K562 (cell line): ENCODE measurements at regions of chr19 and their contacts with region 1.

Region 1: GRCh38 chr19:925526-926322 is at the start of gene ARID3A:
- DNase-seq: peak; percentile 77 to 94 (median 87)
- ATAC-seq: peak; percentile 83
- H3K4me3 ChIP-seq: peak within 1 kb of the TSS; percentile 99
- H3K27ac ChIP-seq: peak within 1 kb of the TSS; percentile 97
- H3K4me1 ChIP-seq: peaks cover 8 to 71% of the 10 kb centered on the region in 2 experiments; a peak in 4 of 5 replicates
- H3K27me3 ChIP-seq: no peaks in the 10 kb centered on the region
- CTCF ChIP-seq: no peak
- EP300 ChIP-seq: no peak
- POLR2A ChIP-seq: no peak
- RAD21 ChIP-seq: no peak
- polyA plus RNA-seq, gene ARID3A: 1.4 to 2.0 TPM

Region 2: DNA sequence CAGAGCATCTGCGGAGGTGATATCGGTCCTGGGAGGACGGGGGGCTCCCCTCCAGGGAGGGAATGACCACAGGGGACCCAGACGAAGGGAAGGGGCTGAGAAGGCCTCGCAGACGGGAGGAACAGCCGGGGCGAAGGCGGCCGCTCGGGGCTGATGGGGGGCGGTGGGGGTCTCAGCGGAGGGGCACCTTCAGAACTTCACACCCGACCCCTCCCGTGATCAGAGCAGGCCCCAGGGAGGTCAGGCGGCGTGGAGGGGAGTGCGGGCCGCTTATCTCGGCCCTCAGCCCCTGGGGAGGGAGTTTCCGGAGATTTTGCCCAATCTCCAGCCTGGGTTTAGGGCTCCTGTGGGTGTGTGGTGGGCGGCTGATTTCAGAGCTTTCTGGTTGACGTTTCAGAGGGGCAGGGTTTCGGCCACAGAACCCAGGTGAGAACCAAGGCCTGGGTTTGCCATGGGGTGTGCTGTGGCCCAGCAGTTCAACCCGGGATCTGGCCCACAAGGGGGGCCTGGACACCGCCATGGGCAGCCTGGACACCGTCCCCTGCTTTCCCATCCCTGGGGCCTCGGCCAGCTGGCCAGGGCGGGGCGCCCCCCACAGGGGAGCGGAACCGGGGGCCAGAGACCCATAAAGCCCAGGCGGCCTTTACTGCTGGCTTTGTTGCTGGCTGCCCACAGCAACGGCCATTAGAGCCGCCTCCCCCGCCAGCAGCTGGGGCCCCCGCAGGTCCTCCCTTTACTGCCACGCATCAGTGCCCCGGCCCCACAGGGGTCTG is 29.1 kb after region 1 on chr19:
- CTCF ChIA-PET with region 1: no interaction called
- POLR2A ChIA-PET with region 1: interaction called, 5 read pairs
- in situ Hi-C with region 1: no loop called
- intact Hi-C with region 1: loop called (anchors 2 kb)
- DNase-seq: peak; percentile 77 to 93 (median 86)
- ATAC-seq: peak; percentile 83
- H3K4me3 ChIP-seq: peak overlapping the region; percentile 7; the same call in 1 of the 2 replicates
- H3K27ac ChIP-seq: peak overlapping the region; percentile 96
- H3K4me1 ChIP-seq: peaks cover 56 to 92% of the 10 kb centered on the region in 2 experiments
- H3K27me3 ChIP-seq: no peaks in the 10 kb centered on the region
- CTCF ChIP-seq: no peak
- EP300 ChIP-seq: peak; percentile 75; the same call in 1 of the 2 replicates
- POLR2A ChIP-seq: 0 out of 2 replicates have a peak, but pooled peaks have one; percentile 35
- RAD21 ChIP-seq: no peak

Region 3: DNA sequence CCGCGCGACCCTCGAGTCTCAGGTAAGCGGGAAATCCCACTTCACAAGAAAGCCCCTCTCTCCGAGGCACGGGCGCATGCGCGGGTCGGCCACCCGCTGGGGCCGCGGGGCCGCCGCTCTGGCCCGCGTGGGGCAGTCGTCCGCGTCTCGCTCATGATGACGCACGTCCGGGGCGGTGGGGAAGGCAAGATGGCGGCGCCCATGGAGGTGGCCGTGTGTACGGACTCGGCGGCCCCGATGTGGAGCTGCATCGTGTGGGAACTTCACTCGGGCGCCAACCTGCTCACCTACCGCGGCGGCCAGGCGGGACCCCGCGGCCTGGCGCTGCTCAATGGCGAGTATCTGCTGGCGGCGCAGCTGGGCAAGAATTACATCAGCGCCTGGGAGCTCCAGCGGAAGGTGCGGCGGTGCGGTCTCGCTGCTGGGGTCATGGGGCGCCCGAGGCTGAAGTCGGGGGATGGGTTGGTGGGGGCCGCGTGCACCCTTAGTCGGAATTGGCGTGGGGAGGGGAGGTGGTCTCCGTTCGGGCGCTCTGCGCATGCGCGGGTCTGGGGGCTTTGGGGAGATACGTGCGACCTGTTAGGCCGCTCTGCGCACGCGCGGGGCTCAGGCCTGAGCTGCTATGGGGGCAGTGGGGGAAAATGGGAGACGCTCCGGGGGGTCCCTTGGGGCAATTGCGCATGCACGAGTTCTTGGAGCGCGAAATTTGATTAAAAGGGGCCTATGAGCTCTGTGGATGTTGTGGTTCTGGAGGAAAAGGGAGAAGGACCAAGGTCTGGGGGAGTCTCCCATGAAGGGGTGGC is 58.6 kb after region 1 on chr19 and contains the start of gene WDR18:
- CTCF ChIA-PET with region 1: interaction called, 158 read pairs
- POLR2A ChIA-PET with region 1: interaction called, 24 read pairs
- in situ Hi-C with region 1: loop called (anchors 5 kb)
- intact Hi-C with region 1: loop called (anchors 1 kb)
- DNase-seq: peak; percentile 94 to 97 (median 95)
- ATAC-seq: peak; percentile 78
- H3K4me3 ChIP-seq: peak within 1 kb of the TSS; percentile 100
- H3K27ac ChIP-seq: peak within 1 kb of the TSS; percentile 91
- H3K4me1 ChIP-seq: peaks cover 24 to 78% of the 10 kb centered on the region in 2 experiments
- H3K27me3 ChIP-seq: no peaks in the 10 kb centered on the region
- CTCF ChIP-seq: no peak
- EP300 ChIP-seq: no peak
- POLR2A ChIP-seq: peak; percentile 78; the same call in 1 of the 2 replicates
- RAD21 ChIP-seq: no peak
- polyA plus RNA-seq, gene WDR18: 0.65 to 1.1 TPM

Region 4: DNA sequence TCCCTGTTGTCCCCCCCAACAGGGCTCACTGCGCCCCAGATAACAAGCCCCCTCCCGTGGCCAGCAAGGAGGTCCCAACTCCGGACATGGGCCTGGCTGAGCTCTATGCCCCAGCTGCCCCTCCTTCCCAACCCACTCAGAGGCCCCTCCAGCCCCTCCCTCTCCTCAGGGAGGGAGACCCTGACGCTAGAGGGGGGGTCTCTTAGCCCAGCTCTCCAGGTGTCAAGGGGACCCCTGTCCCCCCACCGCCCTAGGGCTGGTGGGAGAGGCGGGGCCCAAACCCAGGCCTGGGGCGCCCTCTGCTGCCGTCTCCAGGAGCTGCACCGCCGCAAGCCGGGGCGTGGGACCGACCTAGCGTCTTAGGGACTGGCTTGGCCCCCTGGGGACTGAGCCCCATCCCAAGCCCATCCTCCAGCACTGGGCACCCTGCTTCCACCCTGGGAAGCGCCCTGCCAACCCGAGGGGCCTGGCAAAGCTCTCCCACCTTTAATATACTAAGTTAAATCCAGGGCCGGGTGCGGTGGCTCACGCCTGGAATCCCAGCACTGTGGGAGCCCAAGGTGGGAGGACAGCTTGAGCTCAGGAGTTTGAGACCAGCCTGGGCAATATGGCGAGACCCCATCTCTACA is 75.9 kb after region 1 on chr19:
- CTCF ChIA-PET with region 1: interaction called, 4 read pairs
- POLR2A ChIA-PET with region 1: interaction called, 3 read pairs
- in situ Hi-C with region 1: no loop called
- intact Hi-C with region 1: loop called (anchors 1 kb)
- DNase-seq: peak; percentile 76 to 79 (median 78)
- ATAC-seq: peak; percentile 90
- H3K4me3 ChIP-seq: no peak overlapping the region
- H3K27ac ChIP-seq: no peak overlapping the region
- H3K4me1 ChIP-seq: peaks cover 4 to 60% of the 10 kb centered on the region in 2 experiments
- H3K27me3 ChIP-seq: no peaks in the 10 kb centered on the region
- CTCF ChIP-seq: peak; percentile 78 to 91 (median 89)
- EP300 ChIP-seq: no peak
- POLR2A ChIP-seq: no peak
- RAD21 ChIP-seq: peak; percentile 76 to 93